GM23248 (cell line): ENCODE measurements at regions of chr20 and their contacts with region 1.

Region 1: GRCh38 chr20:4740774-4741431 is 19.2 kb downstream of the PRND start:
- DNase-seq: peak; percentile 53
- H3K4me3 ChIP-seq: no peak overlapping the region
- H3K27ac ChIP-seq: no peak overlapping the region
- H3K4me1 ChIP-seq: no peaks in the 10 kb centered on the region
- H3K27me3 ChIP-seq: peaks cover 14% of the 10 kb centered on the region; the same call in 1 of the 2 replicates

Region 2: DNA sequence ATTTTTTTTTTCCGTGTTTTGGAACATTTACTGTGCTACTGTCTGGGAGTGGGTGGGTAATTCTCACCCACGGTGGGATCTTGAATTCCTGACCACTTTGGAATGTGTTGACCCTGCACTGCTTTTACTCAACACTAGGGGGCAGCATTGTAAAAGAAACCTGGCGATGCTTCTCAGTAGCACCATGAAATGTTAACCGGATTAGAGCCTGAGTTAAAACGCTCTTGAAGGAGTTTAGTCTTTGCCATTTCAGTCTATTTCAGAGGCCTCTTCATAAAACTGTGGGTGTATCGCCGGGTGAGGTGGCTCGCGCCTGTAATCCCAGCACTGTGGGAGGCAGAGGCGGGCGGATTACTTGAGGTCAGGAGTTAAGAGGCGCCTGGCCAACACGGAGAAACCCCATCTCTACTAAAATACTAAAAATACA is 133.6 kb before region 1 on chr20:
- in situ Hi-C with region 1: no loop called
- DNase-seq: peak; percentile 76
- H3K4me3 ChIP-seq: no peak overlapping the region
- H3K27ac ChIP-seq: no peak overlapping the region
- H3K4me1 ChIP-seq: peaks cover 13% of the 10 kb centered on the region
- H3K27me3 ChIP-seq: no peaks in the 10 kb centered on the region

Region 3: GRCh38 chr20:5100684-5101347 is 359.9 kb after region 1 on chr20:
- in situ Hi-C with region 1: loop called (anchors 10 kb)
- DNase-seq: peak; percentile 79
- H3K4me3 ChIP-seq: no peak overlapping the region
- H3K27ac ChIP-seq: peak overlapping the region; percentile 11; the same call in 1 of the 2 replicates
- H3K4me1 ChIP-seq: no peaks in the 10 kb centered on the region
- H3K27me3 ChIP-seq: no peaks in the 10 kb centered on the region